CD4-positive, alpha-beta T cell (primary cell): ENCODE measurements at regions of chr2 and their contacts with region 1.

Region 1: DNA sequence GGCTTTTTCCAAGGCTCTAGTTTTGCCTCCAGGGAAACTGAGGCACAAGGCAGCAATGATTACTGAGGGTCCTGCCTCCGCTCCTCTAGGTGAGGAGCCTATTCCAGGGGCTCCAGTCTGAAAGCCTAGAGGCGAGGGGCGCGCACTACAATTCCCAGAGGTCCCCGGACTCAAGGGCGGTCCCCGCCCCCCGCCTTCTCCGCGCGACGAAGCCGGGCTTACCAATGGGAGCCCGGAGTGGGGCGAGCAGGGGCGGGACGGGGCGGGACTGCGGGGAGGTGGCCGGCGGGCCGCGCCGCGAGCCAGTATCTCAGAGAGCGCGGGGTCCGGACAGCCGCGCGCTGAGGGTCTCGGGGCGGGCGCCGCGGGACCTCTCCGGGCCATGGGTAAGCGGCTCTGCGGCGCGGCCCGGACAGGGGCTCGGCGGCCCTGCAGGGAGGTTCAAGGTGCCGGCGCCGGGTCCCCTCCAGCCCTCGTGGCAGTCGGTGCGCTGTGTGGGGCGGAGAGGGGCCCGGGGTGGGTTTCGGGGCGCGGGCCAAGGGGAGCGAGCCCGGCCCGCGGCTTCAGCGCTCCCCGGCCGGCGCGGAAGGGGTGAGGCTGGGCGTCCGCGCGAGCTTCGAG is at the start of gene ARID5A:
- DNase-seq: peak; percentile 88 to 95 (median 91)
- ATAC-seq: peak; percentile 48
- H3K4me3 ChIP-seq: peak within 1 kb of the TSS; percentile 90
- H3K4me3 Mint-ChIP-seq: peak within 1 kb of the TSS; percentile 99
- H3K27ac ChIP-seq: peak within 1 kb of the TSS; percentile 88 to 99
- H3K27ac Mint-ChIP-seq: peak within 1 kb of the TSS; percentile 99
- H3K4me1 ChIP-seq: peaks cover 76% of the 10 kb centered on the region
- H3K4me1 Mint-ChIP-seq: peaks cover 60% of the 10 kb centered on the region
- H3K27me3 ChIP-seq: no peaks in the 10 kb centered on the region
- H3K27me3 Mint-ChIP-seq: no peaks in the 10 kb centered on the region
- CTCF ChIP-seq: peak; percentile 53
- total RNA-seq, gene ARID5A: 326 to 342 TPM

Region 2: DNA sequence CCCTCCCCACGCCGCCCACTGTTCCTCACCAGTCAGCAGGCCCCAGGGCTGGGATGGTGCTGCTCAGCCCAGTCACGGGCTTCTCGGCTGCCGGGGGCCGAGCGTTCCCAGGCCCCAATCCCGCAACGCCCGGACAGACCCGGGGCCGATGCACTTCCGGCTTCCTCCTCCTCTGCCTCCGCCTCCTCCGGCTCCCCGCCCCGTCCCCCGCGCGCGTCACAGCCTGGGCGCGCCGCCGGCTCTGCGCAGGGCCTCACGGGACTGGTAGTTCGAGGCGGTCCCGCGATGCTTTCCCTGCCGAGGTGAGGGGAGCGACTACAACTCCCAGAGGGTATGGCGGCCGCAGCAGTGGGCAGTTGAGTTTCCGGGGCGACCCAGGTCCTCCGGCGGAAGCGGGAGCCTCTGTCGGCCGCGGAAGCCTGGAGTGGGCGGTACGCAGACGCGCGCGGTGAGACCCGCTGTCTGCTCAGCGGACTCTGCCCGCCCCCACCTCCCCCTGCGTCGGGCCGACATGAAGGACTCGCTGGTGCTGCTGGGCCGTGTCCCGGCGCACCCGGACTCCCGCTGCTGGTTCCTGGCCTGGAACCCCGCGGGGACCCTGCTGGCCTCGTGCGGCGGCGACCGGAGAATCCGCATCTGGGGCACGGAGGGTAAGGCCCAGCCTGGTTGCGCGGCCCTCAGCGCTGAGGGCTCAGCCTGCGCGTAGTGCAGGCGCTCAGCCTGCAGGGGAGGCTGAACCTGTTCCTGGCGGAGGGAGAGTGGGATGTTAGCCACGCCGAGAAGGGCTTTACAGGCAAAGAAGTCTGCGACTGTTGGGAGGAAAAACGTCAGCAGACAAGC is 270.5 kb before region 1 on chr2 and contains the starts of genes CIAO1 and TMEM127:
- CTCF ChIA-PET with region 1: no interaction called
- POLR2A ChIA-PET with region 1: interaction called, 5 read pairs
- intact Hi-C with region 1: loop called in 1 of 2 experiments (anchors 5 kb)
- DNase-seq: peak; percentile 95 to 99 (median 97)
- ATAC-seq: peak; percentile 92
- H3K4me3 ChIP-seq: peak within 1 kb of the TSS; percentile 86
- H3K4me3 Mint-ChIP-seq: peak within 1 kb of the TSS; percentile 92
- H3K27ac ChIP-seq: peak within 1 kb of the TSS; percentile 85 to 87
- H3K27ac Mint-ChIP-seq: peak within 1 kb of the TSS; percentile 82
- H3K4me1 ChIP-seq: peaks cover 51% of the 10 kb centered on the region
- H3K4me1 Mint-ChIP-seq: peaks cover 43% of the 10 kb centered on the region
- H3K27me3 ChIP-seq: no peaks in the 10 kb centered on the region
- H3K27me3 Mint-ChIP-seq: no peaks in the 10 kb centered on the region
- CTCF ChIP-seq: no peak
- total RNA-seq, gene CIAO1: 55.4 to 55.6 TPM
- total RNA-seq, gene TMEM127: 34.2 to 36.0 TPM

Region 3: DNA sequence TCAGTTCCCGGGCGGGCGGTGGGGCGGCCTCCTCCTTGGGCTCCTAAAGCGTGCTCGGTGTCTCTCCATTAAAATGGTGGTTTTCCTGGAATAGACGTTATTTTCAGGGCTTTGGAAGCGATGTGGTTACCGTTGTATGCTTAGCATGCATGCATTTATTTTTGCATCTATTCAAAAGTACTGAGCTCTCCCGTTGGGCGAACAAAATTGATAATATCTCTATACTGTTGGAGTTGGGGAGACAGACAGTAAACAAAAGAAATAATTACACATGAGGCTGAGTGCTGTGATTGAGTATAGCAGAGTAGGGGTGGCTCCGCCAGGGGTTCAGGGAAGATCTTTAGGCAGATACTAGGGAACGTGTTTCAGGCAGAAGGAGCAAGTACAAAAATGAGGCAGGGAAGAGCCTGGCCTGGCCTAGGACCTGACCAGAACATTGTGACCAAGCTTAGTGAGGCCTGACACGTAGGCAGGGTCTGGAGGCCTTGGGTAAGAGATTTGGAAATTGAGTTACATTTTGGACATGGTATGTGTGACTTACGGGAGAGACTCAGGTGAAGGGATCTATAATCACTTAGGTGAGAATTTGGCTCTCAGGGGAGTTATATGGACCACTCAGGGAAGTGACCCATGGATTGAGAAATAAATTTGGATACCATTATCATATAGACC is 200.3 kb before region 1 on chr2:
- CTCF ChIA-PET with region 1: no interaction called
- POLR2A ChIA-PET with region 1: interaction called, 12 read pairs
- intact Hi-C with region 1: no loop called
- DNase-seq: no peak
- ATAC-seq: no peak
- H3K4me3 ChIP-seq: peak overlapping the region; percentile 78
- H3K4me3 Mint-ChIP-seq: peak overlapping the region; percentile 60
- H3K27ac ChIP-seq: peak overlapping the region in 1 of 2 donors; percentile 85
- H3K27ac Mint-ChIP-seq: peak overlapping the region; percentile 54
- H3K4me1 ChIP-seq: peaks cover 22% of the 10 kb centered on the region
- H3K4me1 Mint-ChIP-seq: peaks cover 32% of the 10 kb centered on the region
- H3K27me3 ChIP-seq: no peaks in the 10 kb centered on the region
- H3K27me3 Mint-ChIP-seq: no peaks in the 10 kb centered on the region
- CTCF ChIP-seq: no peak

Region 4: GRCh38 chr2:96470636-96471035 is 65.9 kb before region 1 on chr2:
- CTCF ChIA-PET with region 1: no interaction called
- POLR2A ChIA-PET with region 1: no interaction called
- intact Hi-C with region 1: no loop called
- DNase-seq: peak; percentile 21 to 70 (median 38)
- ATAC-seq: peak; percentile 69
- H3K4me3 ChIP-seq: no peak overlapping the region
- H3K4me3 Mint-ChIP-seq: no peak overlapping the region
- H3K27ac ChIP-seq: no peak overlapping the region
- H3K27ac Mint-ChIP-seq: no peak overlapping the region
- H3K4me1 ChIP-seq: peaks cover 6% of the 10 kb centered on the region
- H3K4me1 Mint-ChIP-seq: no peaks in the 10 kb centered on the region
- H3K27me3 ChIP-seq: peaks cover 0 to 6% of the 10 kb centered on the region in 2 experiments
- H3K27me3 Mint-ChIP-seq: peaks cover 7% of the 10 kb centered on the region
- CTCF ChIP-seq: peak; percentile 63

Region 5: DNA sequence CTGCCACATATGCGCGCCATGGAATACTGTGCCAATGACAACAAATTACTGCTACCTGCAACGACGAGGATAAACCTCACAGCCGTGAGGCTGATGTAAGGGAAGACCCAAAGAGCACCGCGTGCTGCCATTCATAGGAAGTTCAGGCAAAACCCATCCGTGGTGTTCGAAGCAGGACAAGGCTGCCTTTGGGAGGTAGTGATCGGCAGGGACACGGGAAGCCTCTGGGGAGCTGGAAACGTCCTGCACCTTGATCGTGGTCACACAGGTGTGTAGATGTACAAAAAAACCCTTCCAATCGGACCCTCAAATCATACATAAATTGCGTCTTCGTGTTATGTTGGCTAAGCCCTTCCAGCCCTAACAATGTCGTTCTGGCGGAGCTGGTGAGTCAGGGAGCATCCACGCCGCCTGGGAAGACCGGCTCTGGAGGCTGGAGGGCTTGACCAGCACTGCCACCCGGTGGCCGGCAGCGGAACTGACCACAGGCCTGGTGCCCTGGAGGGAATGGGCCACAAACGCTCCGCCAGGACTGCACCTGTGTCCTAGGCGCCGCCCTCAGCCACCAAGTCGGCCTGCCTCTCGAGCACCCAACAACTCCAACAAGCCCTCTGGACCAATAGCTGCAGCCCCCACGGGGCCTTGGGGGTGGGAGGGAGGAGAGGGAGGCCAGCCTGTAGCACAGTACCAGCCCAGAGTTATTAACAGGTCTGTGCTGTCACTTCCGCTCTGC is 27.3 kb before region 1 on chr2:
- CTCF ChIA-PET with region 1: interaction called, 3 read pairs
- POLR2A ChIA-PET with region 1: interaction called, 16 read pairs
- intact Hi-C with region 1: no loop called
- DNase-seq: peak in 12 of 14 experiments; percentile 26 to 75 (median 42)
- ATAC-seq: no peak
- H3K4me3 ChIP-seq: no peak overlapping the region
- H3K4me3 Mint-ChIP-seq: peak overlapping the region; percentile 6
- H3K27ac ChIP-seq: no peak overlapping the region
- H3K27ac Mint-ChIP-seq: no peak overlapping the region
- H3K4me1 ChIP-seq: peaks cover 20% of the 10 kb centered on the region
- H3K4me1 Mint-ChIP-seq: peaks cover 18% of the 10 kb centered on the region
- H3K27me3 ChIP-seq: peaks cover 5 to 11% of the 10 kb centered on the region in 2 experiments
- H3K27me3 Mint-ChIP-seq: peaks cover 22% of the 10 kb centered on the region
- CTCF ChIP-seq: peak; percentile 64

Region 6: DNA sequence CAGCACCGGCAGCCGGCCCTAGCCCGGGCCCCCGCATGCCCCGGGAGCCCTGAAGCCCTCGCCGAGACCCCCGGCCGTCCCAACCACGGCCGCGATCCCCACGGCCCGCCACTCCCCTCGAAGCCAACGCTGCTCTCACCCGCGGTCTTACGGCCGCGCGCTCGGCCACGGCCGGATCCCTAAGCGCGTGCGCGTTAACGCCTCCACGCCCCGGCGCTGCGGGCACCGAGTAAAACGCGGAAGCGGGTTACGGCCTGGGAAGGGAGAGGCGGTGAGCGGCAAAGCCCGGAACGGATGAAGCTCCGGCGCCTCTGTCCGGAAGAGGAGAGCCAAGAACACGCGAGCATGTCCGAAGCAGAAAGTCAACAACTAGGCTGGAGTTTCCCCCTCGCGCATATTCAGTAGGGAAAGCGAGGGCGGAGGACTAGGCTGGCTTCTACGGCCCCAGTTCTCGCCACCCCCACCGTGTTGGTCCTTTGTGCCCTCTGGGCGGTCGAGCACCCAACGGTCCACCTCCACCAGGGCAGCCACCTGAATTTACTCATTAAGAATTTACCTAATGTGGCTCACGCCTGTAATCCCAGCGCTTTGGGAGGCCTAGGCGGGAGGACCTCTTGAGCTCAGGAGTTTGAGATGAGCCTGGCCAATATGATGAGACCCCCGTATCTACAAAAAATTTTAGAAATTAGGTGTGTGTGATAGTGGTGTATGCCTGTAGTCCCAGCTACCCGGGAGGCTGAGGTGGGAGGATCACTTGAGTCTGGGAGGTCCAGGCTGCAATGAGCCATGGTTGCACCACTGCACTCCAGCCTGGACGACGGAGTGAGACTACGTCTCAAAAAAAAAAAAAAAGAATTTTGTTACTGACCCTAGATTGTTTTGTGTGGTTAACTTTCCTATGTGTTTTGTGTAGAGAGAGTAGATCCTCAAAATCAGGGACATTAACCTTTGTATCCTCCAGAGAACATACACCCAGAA is 101.9 kb after region 1 on chr2 and contains the start of gene KANSL3:
- CTCF ChIA-PET with region 1: no interaction called
- POLR2A ChIA-PET with region 1: interaction called, 7 read pairs
- intact Hi-C with region 1: loop called (anchors 2 to 5 kb)
- DNase-seq: peak; percentile 79 to 95 (median 84)
- ATAC-seq: peak; percentile 85
- H3K4me3 ChIP-seq: peak within 1 kb of the TSS; percentile 98
- H3K4me3 Mint-ChIP-seq: peak within 1 kb of the TSS; percentile 99
- H3K27ac ChIP-seq: peak within 1 kb of the TSS; percentile 69 to 75
- H3K27ac Mint-ChIP-seq: peak within 1 kb of the TSS; percentile 96
- H3K4me1 ChIP-seq: peaks cover 29% of the 10 kb centered on the region
- H3K4me1 Mint-ChIP-seq: peaks cover 45% of the 10 kb centered on the region
- H3K27me3 ChIP-seq: no peaks in the 10 kb centered on the region
- H3K27me3 Mint-ChIP-seq: no peaks in the 10 kb centered on the region
- CTCF ChIP-seq: no peak
- total RNA-seq, gene KANSL3: 54.4 to 61.8 TPM

Region 7: GRCh38 chr2:96788442-96789244 is 252.1 kb after region 1 on chr2:
- CTCF ChIA-PET with region 1: no interaction called
- POLR2A ChIA-PET with region 1: no interaction called
- intact Hi-C with region 1: no loop called
- DNase-seq: no peak
- ATAC-seq: no peak
- H3K4me3 ChIP-seq: no peak overlapping the region
- H3K4me3 Mint-ChIP-seq: no peak overlapping the region
- H3K27ac ChIP-seq: no peak overlapping the region
- H3K27ac Mint-ChIP-seq: no peak overlapping the region
- H3K4me1 ChIP-seq: no peaks in the 10 kb centered on the region
- H3K4me1 Mint-ChIP-seq: no peaks in the 10 kb centered on the region
- H3K27me3 ChIP-seq: no peaks in the 10 kb centered on the region
- H3K27me3 Mint-ChIP-seq: no peaks in the 10 kb centered on the region
- CTCF ChIP-seq: no peak

Region 8: DNA sequence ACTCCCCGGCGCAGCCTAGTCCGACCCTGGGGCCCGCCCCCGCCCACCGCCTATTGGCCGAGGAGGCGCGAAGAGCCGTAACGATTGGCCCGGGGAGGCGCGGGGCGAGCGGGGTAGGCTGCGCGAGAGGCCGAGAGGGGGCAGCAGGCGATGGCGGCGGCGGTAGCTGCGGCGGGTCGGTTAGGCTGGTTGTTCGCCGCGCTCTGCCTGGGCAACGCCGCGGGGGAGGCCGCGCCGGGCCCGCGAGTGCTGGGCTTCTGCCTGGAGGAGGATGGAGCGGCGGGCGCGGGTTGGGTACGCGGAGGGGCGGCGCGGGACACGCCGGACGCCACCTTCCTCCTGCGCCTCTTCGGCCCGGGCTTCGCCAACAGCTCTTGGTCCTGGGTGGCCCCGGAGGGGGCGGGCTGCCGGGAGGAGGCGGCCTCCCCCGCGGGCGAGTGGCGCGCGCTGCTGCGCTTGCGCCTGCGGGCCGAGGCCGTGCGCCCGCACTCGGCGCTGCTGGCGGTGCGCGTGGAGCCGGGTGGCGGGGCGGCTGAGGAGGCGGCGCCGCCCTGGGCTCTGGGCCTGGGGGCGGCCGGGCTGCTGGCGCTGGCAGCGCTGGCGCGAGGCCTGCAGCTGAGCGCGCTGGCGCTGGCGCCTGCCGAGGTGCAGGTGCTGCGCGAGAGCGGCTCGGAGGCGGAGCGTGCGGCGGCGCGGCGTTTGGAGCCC is 279.7 kb after region 1 on chr2 and contains the start of gene CNNM3:
- CTCF ChIA-PET with region 1: no interaction called
- POLR2A ChIA-PET with region 1: interaction called, 19 read pairs
- intact Hi-C with region 1: loop called in 1 of 2 experiments (anchors 5 kb)
- DNase-seq: peak; percentile 90 to 98 (median 96)
- ATAC-seq: peak; percentile 91
- H3K4me3 ChIP-seq: peak within 1 kb of the TSS; percentile 77
- H3K4me3 Mint-ChIP-seq: peak within 1 kb of the TSS; percentile 94
- H3K27ac ChIP-seq: peak within 1 kb of the TSS; percentile 52 to 60
- H3K27ac Mint-ChIP-seq: peak within 1 kb of the TSS; percentile 88
- H3K4me1 ChIP-seq: peaks cover 49% of the 10 kb centered on the region
- H3K4me1 Mint-ChIP-seq: peaks cover 62% of the 10 kb centered on the region
- H3K27me3 ChIP-seq: no peaks in the 10 kb centered on the region
- H3K27me3 Mint-ChIP-seq: no peaks in the 10 kb centered on the region
- CTCF ChIP-seq: peak; percentile 65
- total RNA-seq, gene CNNM3: 48.7 to 53.5 TPM